ENCODE measurements at regions of chr19 and their contacts with region 1.

Region 1: DNA sequence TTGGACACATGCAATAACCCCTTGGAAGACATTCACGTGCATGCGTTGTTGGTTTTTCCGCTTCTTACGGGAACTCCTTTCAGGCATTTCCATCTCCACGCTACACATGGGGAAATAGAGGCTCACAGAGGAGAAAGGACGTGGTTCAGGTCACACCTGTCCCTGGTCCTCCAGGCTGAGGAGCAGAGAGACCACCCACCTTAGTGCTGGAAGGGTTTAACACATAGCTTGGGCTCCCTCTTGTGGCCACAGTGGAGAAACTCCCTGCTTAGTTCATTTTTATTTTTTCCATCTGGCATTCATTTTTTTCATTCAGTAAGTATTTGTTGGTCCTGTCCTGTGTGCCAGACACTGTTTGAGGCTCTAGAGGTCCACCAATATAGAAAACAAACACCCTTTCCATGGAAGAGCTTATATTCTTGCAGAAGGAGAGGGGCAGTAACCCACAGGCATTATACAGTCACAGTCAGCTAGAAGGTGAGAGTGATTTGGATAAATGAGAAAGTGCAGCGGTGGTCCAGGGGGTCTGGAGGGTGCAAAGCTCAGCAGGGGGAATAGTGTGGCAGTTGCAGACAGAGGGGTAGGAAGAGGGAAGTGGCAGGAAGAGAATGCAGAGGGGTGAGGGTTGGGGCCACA is 24.2 kb upstream of the TTYH1 start:
- H3K4me3 ChIP-seq: no peak overlapping the region
- H3K27ac ChIP-seq: no peak overlapping the region
- H3K4me1 ChIP-seq: no peaks in the 10 kb centered on the region
- CTCF ChIP-seq: peak; percentile 57

Region 2: DNA sequence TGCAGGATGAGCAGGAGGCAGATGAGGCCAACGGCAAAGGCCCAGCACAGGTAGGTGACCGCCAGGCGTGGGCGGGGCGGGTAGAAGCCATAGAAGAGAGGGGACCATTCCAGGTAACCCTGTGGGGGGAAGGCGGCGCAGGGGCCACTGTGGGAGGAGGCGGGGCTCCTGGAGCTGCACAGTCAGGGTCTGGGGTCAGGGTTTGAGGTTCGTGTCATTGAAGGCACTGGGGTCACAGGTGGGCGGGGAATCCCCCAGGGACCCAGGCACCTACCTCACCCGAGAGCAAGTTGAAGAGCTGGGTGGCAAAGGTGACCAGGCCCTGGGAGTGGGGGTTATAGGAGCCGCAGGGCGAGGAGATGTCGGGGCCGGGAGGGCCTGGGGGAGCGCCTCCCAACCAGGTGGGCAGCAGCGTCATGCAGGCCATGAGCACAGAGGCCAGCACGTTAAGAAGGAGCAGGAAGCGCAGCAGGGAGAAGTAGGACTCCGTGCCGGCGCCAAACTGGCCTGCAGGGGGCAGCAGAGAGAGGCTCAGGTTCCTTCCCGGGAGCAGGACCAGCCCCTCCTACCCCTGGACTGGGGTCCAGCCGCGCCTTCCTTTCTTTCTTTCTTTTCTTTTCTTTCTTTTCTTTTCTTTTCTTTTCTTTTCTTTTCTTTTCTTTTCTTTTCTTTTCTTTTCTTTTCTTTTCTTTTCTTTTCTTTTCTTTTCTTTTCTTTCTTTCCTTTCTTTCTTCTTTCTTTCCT is 222.7 kb before region 1 on chr19:
- CTCF ChIA-PET with region 1: interaction called, 18 read pairs
- POLR2A ChIA-PET with region 1: no interaction called
- H3K4me3 ChIP-seq: no peak overlapping the region
- H3K27ac ChIP-seq: no peak overlapping the region
- H3K4me1 ChIP-seq: no peaks in the 10 kb centered on the region
- CTCF ChIP-seq: peak; percentile 83

Region 3: DNA sequence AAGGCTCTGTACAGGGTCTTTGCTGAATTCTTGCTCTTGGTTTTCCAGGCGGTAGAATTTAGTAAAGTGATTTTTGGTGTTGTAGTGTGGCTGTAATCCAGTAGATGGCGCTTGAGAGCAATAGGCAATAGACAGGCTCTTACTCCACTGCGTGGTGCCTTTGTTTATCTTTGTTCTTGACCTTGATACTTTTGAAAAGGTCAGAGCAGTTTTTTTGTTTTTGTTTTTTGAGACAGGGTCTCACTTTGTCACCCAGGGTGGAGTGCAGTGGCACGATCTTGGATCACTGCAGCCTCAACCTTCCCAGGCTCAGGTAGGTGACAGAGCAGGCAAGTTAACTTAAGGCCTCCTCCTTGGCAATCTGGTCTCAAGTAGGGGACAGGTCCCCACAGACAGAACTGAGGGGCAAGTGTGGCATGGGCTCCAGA is 65.9 kb before region 1 on chr19:
- CTCF ChIA-PET with region 1: interaction called, 62 read pairs
- POLR2A ChIA-PET with region 1: no interaction called
- H3K4me3 ChIP-seq: no peak overlapping the region
- H3K27ac ChIP-seq: no peak overlapping the region
- H3K4me1 ChIP-seq: no peaks in the 10 kb centered on the region
- CTCF ChIP-seq: peak; percentile 68

Region 4: DNA sequence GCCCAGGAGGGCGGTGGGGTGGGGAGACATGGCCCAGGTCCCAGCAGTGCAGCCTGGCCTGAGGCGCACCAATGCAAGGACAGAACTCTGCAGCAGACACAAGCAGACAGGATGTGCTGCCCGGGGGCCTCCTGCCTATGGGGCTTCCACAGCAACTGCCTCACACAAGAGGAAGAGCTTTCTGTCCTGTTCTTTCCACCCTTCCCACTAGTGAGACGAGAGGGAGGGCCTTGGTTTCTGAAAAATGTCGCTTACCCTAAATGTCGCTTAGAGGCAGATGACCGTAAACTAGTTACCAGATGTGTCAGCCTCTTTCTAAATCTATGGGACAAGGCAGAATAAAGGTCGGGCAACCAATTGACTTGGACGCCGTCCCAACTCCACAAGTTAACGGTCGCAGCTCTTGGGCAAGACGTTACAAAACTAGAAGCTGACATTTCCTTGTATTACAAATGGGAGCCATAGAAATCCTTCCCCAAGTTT is 26.2 kb before region 1 on chr19 and contains the start of gene LAIR1:
- CTCF ChIA-PET with region 1: interaction called, 12 read pairs
- POLR2A ChIA-PET with region 1: no interaction called
- H3K4me3 ChIP-seq: no peak within 1 kb of the TSS
- H3K27ac ChIP-seq: no peak within 1 kb of the TSS
- H3K4me1 ChIP-seq: no peaks in the 10 kb centered on the region
- CTCF ChIP-seq: no peak

Region 5: GRCh38 chr19:54379187-54379678 is 11.8 kb before region 1 on chr19:
- CTCF ChIA-PET with region 1: interaction called, 19 read pairs
- POLR2A ChIA-PET with region 1: no interaction called
- H3K4me3 ChIP-seq: no peak overlapping the region
- H3K27ac ChIP-seq: no peak overlapping the region
- H3K4me1 ChIP-seq: no peaks in the 10 kb centered on the region
- CTCF ChIP-seq: no peak

Region 6: GRCh38 chr19:54418030-54418929 is 27.2 kb after region 1 on chr19:
- CTCF ChIA-PET with region 1: interaction called, 15 read pairs
- POLR2A ChIA-PET with region 1: no interaction called
- H3K4me3 ChIP-seq: no peak overlapping the region
- H3K27ac ChIP-seq: no peak overlapping the region
- H3K4me1 ChIP-seq: no peaks in the 10 kb centered on the region; the same call in 1 of the 2 replicates
- CTCF ChIP-seq: no peak

Region 7: GRCh38 chr19:54439174-54439853 is 48.3 kb after region 1 on chr19:
- CTCF ChIA-PET with region 1: interaction called, 29 read pairs
- POLR2A ChIA-PET with region 1: no interaction called
- H3K4me3 ChIP-seq: no peak overlapping the region
- H3K27ac ChIP-seq: no peak overlapping the region
- H3K4me1 ChIP-seq: no peaks in the 10 kb centered on the region
- CTCF ChIP-seq: peak; percentile 68

Region 8: DNA sequence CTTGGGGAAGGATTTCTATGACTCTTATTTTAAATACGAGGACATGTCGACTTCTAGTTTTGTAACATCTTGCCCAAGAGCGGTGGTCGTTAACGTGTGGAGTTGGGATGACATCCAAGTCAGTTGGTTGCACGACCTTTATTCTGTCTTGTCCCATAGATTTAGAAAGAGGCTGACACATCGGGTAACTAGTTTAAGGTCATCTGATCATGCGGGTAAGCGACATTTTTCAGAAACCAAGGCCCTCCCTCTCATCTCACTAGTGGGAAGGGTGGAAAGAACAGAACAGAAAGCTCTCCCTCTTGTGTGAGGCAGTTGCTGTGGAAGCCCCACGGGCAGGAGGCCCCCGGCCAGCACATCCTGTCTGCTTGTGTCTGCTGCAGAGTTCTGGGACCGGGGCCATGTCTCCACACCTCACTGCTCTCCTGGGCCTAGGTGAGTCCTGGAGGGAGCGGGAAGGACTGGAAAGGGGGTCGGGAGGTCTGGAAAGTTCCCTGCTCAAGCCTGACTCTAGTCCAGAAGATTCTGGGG is 111.5 kb after region 1 on chr19 and contains the start of gene LAIR2:
- CTCF ChIA-PET with region 1: no interaction called
- POLR2A ChIA-PET with region 1: no interaction called
- H3K4me3 ChIP-seq: no peak within 1 kb of the TSS
- H3K27ac ChIP-seq: no peak within 1 kb of the TSS
- H3K4me1 ChIP-seq: no peaks in the 10 kb centered on the region
- CTCF ChIP-seq: no peak

Measured in HEK293 (cell line).